Activated CD4-positive, alpha-beta T cell treated with anti-CD3 and anti-CD28 coated beads, Interleukin-2, amount 10 ng/mL, durations not matched to agents 24 days and 14 days (primary cell): ENCODE measurements at regions of chr1 and their contacts with region 1.

Region 1: GRCh38 chr1:110338886-110339406 is at the start of gene RBM15:
- DNase-seq: peak; percentile 99
- H3K4me3 Mint-ChIP-seq: no peak within 1 kb of the TSS
- H3K27ac Mint-ChIP-seq: no peak within 1 kb of the TSS
- H3K4me1 Mint-ChIP-seq: peaks cover 60% of the 10 kb centered on the region
- H3K27me3 Mint-ChIP-seq: no peaks in the 10 kb centered on the region
- total RNA-seq, gene RBM15: 55.6 and 57.1 TPM in 2 replicates

Region 2: GRCh38 chr1:109426278-109427170 is 912.4 kb before region 1 on chr1 and contains the start of gene PSMA5:
- intact Hi-C with region 1: loop called (anchors 5 kb)
- DNase-seq: peak; percentile 98
- H3K4me3 Mint-ChIP-seq: peak within 1 kb of the TSS; percentile 94
- H3K27ac Mint-ChIP-seq: peak within 1 kb of the TSS; percentile 97
- H3K4me1 Mint-ChIP-seq: peaks cover 27% of the 10 kb centered on the region
- H3K27me3 Mint-ChIP-seq: peaks cover 2% of the 10 kb centered on the region
- total RNA-seq, gene PSMA5: 262 and 270 TPM in 2 replicates

Region 3: GRCh38 chr1:110034451-110035235 is 304.3 kb before region 1 on chr1 and contains the start of gene STRIP1:
- intact Hi-C with region 1: loop called (anchors 1 kb)
- DNase-seq: peak; percentile 98
- H3K4me3 Mint-ChIP-seq: peak within 1 kb of the TSS; percentile 97
- H3K27ac Mint-ChIP-seq: peak within 1 kb of the TSS; percentile 86
- H3K4me1 Mint-ChIP-seq: peaks cover 46% of the 10 kb centered on the region
- H3K27me3 Mint-ChIP-seq: no peaks in the 10 kb centered on the region
- total RNA-seq, gene STRIP1: 41.0 and 43.8 TPM in 2 replicates

Region 4: GRCh38 chr1:110235834-110236682 is 102.9 kb before region 1 on chr1:
- intact Hi-C with region 1: loop called (anchors 1 kb)
- DNase-seq: no peak
- H3K4me3 Mint-ChIP-seq: peak overlapping the region; percentile 74
- H3K27ac Mint-ChIP-seq: peak overlapping the region; percentile 93
- H3K4me1 Mint-ChIP-seq: peaks cover 39% of the 10 kb centered on the region
- H3K27me3 Mint-ChIP-seq: no peaks in the 10 kb centered on the region

Region 5: GRCh38 chr1:110407260-110408210 is 68.6 kb after region 1 on chr1 and contains the start of gene LAMTOR5:
- intact Hi-C with region 1: loop called (anchors 1 kb)
- DNase-seq: peak; percentile 98
- H3K4me3 Mint-ChIP-seq: peak within 1 kb of the TSS; percentile 99
- H3K27ac Mint-ChIP-seq: peak within 1 kb of the TSS; percentile 98
- H3K4me1 Mint-ChIP-seq: peaks cover 17% of the 10 kb centered on the region
- H3K27me3 Mint-ChIP-seq: no peaks in the 10 kb centered on the region
- total RNA-seq, gene LAMTOR5: 170 and 180 TPM in 2 replicates

Region 6: DNA sequence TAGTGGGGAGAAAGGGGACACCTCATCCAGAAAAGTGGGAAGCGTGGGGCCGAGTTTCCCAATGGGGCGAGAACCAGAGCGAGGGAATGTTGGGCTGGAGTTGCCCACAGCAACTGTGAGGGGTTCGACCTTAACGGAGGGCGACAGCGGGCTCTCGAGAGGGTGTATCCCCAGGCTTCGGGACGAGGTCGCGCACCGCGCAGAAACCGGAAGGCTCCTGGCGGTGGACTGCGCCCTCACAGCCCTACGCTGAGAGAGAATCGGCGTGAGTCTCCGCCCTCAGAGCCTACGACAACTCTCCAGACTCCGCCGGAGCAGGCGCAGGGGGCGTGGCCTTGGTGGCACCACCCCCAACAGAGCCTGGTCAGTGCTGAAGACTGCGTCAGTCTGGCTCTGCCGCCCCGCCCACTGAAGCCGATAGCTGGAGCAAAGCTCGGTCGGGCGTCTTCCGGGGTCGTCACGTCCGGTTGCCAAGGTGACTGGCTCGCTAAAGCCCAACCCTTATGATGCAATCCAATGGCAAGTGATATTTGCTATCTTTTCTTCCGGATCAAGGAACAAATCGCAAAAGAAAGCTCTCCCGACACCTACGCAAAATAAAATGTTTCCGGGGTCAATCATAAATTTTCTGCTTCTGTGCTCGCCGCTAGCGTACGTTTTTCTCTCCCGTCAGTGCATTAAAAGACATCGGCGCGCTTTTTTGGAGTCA is 624.9 kb after region 1 on chr1 and contains the start of gene LRIF1:
- intact Hi-C with region 1: loop called (anchors 2 kb)
- DNase-seq: peak; percentile 100
- H3K4me3 Mint-ChIP-seq: peak within 1 kb of the TSS; percentile 89
- H3K27ac Mint-ChIP-seq: peak within 1 kb of the TSS; percentile 97
- H3K4me1 Mint-ChIP-seq: peaks cover 28% of the 10 kb centered on the region
- H3K27me3 Mint-ChIP-seq: peaks cover 10% of the 10 kb centered on the region
- total RNA-seq, gene LRIF1: 14.0 and 14.4 TPM in 2 replicates

Region 7: DNA sequence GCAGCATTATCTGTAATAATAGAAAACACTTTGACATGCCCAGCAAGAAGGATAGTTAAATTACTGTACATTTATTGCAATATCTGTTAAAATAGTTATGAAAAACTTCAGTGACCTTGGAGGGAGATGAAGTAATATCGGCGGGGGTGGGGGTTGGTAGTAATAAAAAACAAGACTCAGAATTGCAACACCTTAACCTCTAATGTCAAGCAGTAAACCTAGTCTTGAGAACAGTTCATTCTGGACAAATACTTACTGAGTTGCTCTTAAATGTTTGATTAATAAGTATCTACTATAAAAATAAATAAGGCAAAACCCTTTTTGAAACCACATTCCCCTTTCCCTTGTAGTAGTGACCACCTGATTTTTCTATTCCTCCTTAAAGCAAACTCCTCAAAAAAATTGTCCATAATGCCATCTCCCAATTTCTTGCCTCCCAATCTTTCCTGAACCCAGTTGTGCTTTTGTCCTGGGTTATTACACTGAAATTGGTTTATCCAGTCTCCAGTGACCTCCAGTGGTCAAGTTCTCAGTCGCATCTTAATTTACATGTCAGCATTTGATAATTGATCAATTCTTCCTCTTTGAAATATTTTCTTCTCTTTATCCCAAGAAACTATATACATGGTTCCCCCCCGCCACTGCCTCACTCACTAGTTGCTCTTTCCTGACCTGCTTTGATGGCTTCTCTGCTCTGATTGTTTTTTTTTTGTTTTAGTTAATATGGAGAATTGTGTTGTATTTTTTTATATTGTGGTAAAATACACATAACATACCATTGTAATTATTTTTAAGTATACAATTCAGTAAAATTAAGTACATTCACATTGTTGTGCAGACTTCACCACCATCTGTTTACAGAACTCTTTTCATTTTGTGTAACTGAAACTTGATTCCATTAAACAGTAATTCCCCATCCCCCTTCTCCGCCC is 1317.4 kb after region 1 on chr1:
- intact Hi-C with region 1: no loop called
- DNase-seq: peak; percentile 68
- H3K4me3 Mint-ChIP-seq: no peak overlapping the region
- H3K27ac Mint-ChIP-seq: peak overlapping the region; percentile 10
- H3K4me1 Mint-ChIP-seq: peaks cover 34% of the 10 kb centered on the region
- H3K27me3 Mint-ChIP-seq: no peaks in the 10 kb centered on the region